ENCODE measurements at regions of chr1 and their contacts with region 1.

Region 1: GRCh38 chr1:208238710-208239472 is 5.3 kb downstream of the PLXNA2 start:
- DNase-seq: no peak
- H3K4me3 ChIP-seq: no peak overlapping the region
- H3K27ac ChIP-seq: peak overlapping the region; percentile 30 to 46 (median 42)
- H3K4me1 ChIP-seq: peaks cover 0 to 79% (median 73%) of the 10 kb centered on the region in 4 donors
- H3K27me3 ChIP-seq: no peaks in the 10 kb centered on the region
- CTCF ChIP-seq: peak; percentile 40 to 67 (median 46)
- EP300 ChIP-seq: no peak
- POLR2A ChIP-seq: no peak

Region 2: GRCh38 chr1:206693029-206693428 is 1545.9 kb before region 1 on chr1:
- intact Hi-C with region 1: loop called (anchors 10 kb)
- DNase-seq: peak; percentile 95
- H3K4me3 ChIP-seq: peak overlapping the region in 2 of 4 donors; percentile 20 to 24
- H3K27ac ChIP-seq: peak overlapping the region; percentile 83 to 94 (median 85)
- H3K4me1 ChIP-seq: peaks cover 0 to 100% (median 96%) of the 10 kb centered on the region in 4 donors
- H3K27me3 ChIP-seq: no peaks in the 10 kb centered on the region
- CTCF ChIP-seq: no peak
- EP300 ChIP-seq: no peak
- POLR2A ChIP-seq: no peak

Region 3: GRCh38 chr1:207828485-207829158 is 410.3 kb before region 1 on chr1:
- intact Hi-C with region 1: loop called (anchors 10 kb)
- DNase-seq: peak; percentile 91
- H3K4me3 ChIP-seq: no peak overlapping the region
- H3K27ac ChIP-seq: peak overlapping the region; percentile 91 to 99 (median 94)
- H3K4me1 ChIP-seq: peaks cover 0 to 94% (median 88%) of the 10 kb centered on the region in 4 donors
- H3K27me3 ChIP-seq: no peaks in the 10 kb centered on the region
- CTCF ChIP-seq: peak; percentile 86 to 97 (median 92)
- EP300 ChIP-seq: no peak
- POLR2A ChIP-seq: no peak

Region 4: DNA sequence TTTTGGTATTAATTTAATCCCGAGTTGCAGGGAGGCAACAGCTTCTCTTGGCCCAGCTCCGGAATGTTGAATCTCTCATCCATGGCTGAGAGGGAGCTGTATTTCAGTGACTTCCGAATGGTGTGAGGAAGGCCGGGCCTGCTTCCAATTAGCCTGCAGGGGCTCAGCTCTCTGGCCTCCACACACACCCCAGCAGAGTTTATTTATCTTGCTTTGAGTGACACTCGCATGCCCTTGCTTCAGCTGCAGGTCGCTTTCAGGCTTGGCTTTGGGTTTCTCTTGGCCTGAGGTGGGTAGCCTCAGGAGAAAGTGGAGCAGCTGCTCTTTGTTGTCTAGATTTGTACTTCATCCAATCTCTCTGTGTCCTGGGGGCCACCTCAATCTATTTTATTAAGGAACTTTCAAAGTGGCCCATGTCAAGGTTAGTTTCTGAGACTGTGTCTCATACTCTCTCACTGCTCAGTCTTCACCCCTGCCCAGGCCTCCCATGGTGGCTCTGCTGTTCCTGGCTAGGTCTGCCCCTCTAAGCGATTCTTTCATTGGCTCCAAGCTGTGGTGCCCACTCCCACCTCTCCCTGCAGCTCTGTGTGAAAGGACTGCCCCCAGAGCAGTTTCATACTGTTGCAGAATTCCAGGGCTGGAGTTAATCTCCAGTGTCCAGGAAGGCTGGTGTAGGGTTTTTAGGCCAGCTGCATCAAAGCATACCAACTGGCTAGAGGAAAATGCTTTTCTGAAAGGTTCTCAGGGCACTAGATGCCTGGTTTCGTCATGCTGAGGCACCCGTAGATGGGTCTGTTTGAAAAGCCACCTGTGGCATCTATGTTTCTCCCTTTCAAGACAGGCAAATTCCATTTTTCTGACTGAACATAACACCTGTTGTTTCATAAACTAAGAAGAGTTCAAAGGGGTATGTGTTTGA is 148.2 kb before region 1 on chr1:
- intact Hi-C with region 1: loop called (anchors 2 kb)
- DNase-seq: no peak
- H3K4me3 ChIP-seq: no peak overlapping the region
- H3K27ac ChIP-seq: peak overlapping the region; percentile 44 to 62 (median 52)
- H3K4me1 ChIP-seq: peaks cover 0 to 32% (median 26%) of the 10 kb centered on the region in 4 donors
- H3K27me3 ChIP-seq: no peaks in the 10 kb centered on the region
- CTCF ChIP-seq: no peak
- EP300 ChIP-seq: no peak
- POLR2A ChIP-seq: no peak